ENCODE measurements at regions of chr19 and their contacts with region 1.

Region 1: GRCh38 chr19:40529093-40529954 is 47.3 kb upstream of the SHKBP1 start:
- DNase-seq: peak; percentile 85 to 86
- H3K4me3 ChIP-seq: peak overlapping the region in 2 of 3 donors; percentile 15 to 41
- H3K27ac ChIP-seq: no peak overlapping the region
- H3K4me1 ChIP-seq: peaks cover 0 to 14% of the 10 kb centered on the region in 2 donors
- H3K27me3 ChIP-seq: no peaks in the 10 kb centered on the region
- CTCF ChIP-seq: peak; percentile 66 to 99 (median 92)
- POLR2A ChIP-seq: no peak

Region 2: GRCh38 chr19:40465557-40466150 is 63.7 kb before region 1 on chr19 and contains the start of gene BLVRB:
- intact Hi-C with region 1: loop called (anchors 10 kb)
- DNase-seq: peak; percentile 100
- H3K4me3 ChIP-seq: peak within 1 kb of the TSS; percentile 55 to 80 (median 64)
- H3K27ac ChIP-seq: peak within 1 kb of the TSS; percentile 91 to 95 (median 94)
- H3K4me1 ChIP-seq: peaks cover 18 to 31% of the 10 kb centered on the region in 2 donors
- H3K27me3 ChIP-seq: no peaks in the 10 kb centered on the region
- CTCF ChIP-seq: no peak
- POLR2A ChIP-seq: peak; percentile 85 to 98
- total RNA-seq, gene BLVRB: 111 to 238 (median 205) TPM

Region 3: GRCh38 chr19:40598121-40598917 is 69.0 kb after region 1 on chr19:
- intact Hi-C with region 1: loop called (anchors 5 kb)
- DNase-seq: peak; percentile 82 to 86
- H3K4me3 ChIP-seq: no peak overlapping the region
- H3K27ac ChIP-seq: no peak overlapping the region
- H3K4me1 ChIP-seq: peaks cover 36 to 65% of the 10 kb centered on the region in 2 donors
- H3K27me3 ChIP-seq: no peaks in the 10 kb centered on the region
- CTCF ChIP-seq: peak; percentile 87 to 94 (median 93)
- POLR2A ChIP-seq: no peak

Measured in thyroid gland (tissue), 4 donors.